ENCODE measurements at regions of chr6 and their contacts with region 1.

Region 1: GRCh38 chr6:28274888-28275287 is 6.5 kb upstream of the PGBD1 start:
- DNase-seq: no peak

Region 2: DNA sequence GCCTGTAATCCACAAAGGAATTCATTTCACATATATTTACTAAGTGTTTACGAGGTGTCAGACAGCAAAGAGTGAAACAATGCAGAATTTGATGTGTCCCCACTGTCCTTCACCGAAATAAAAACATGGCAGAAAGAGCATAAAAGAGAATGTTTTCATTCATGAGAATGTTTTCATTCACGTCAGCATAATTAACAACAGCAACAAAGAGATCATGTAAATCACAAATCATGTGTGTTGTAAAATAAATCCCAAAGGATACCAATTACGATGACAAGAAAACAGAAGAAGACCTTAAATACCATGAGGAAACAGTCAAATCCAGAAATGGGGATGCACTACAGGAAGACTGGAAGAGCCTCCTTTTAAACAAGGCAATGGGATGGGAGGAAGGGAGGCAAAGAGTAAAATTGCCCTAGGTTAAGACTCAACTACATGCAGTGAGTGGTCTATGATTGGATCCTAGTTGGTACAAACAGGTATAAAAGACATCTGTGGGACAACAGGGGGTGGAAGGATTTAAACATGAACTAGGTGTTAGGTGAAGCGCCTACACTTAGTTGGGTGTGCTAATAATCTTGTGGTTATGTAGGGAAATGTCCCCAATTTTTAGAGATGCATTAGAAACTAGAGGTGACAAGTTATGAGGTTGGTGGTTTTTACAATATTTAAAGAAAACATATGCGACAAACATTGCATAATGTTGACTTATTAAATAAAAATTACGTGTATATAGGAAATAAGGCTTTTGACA is 59.6 kb after region 1 on chr6:
- intact Hi-C with region 1: loop called in 1 of 2 experiments (anchors 5 kb)
- DNase-seq: no peak